Activated CD4-positive, alpha-beta memory T cell treated with anti-CD3 and anti-CD28 coated beads, Interleukin-2, amount 10 ng/mL, durations not matched to agents 7 days and 5 days (primary cell): ENCODE measurements at regions of chr9 and their contacts with region 1.

Region 1: DNA sequence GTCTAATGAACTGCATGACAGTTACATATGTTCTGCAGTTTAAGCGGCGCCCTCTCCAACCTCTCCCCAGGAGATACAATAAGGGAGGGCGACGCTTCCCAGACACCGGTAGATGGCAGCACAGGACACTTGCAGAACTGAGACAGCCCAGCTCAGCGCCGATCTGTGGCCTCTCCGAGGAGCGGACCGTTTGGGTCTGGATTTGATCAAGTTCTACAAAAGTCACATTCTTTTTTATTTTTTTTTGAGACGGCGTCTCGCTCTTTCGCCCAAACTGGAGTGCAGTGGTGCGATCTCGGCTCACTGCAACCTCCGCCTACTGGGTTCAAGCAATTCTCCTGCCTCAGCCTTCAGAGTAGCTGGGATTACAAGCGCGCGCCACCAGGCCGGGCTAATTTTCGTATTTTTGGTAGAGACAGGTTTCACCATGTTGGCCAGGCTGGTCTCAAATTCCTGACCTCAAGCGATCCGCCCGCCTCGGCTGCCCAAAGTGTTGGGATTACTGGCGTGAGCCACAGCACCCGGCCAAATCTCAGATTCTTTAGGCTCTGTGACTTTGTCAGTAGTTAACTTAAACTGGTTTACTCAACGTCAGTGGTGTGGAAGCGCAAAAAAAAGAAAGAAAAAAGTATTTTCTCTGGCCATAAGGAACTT is 1.4 kb upstream of the ATOSB start:
- DNase-seq: peak; percentile 89
- H3K4me3 Mint-ChIP-seq: peak overlapping the region; percentile 98
- H3K27ac Mint-ChIP-seq: peak overlapping the region; percentile 92
- H3K4me1 Mint-ChIP-seq: peaks cover 38% of the 10 kb centered on the region
- H3K27me3 Mint-ChIP-seq: no peaks in the 10 kb centered on the region

Region 2: DNA sequence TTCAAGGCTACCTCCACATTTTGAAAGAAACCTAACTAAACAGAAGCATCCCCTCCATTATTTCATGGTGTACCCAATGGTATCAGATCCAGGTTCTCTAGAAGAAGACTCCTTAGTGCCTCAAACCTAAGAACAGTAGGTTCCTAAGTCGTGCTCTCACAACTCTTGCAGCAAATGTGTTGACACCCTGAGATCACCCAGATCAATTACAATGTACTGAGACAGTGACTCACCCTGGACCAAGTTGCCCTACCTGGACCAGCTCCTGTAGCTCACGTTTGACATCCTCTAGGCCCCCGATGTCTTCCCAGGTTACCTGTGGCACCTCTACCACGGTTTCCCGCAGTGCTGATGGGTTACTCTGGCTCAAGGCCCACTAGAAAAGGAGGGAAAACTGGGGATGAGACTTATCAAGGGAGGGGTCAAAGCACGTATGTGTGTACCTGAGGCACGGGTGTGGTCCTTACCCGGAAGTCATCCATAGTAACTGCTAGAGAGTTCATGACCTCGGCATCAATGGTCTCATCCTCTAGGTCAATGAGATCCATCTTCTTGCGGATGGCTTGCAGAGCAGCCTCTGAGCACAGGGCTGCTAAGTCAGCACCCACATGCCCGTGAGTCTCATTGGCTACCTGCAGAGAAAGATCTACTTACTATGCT is 56.3 kb before region 1 on chr9:
- CTCF ChIA-PET with region 1: no interaction called
- POLR2A ChIA-PET with region 1: no interaction called
- DNase-seq: no peak
- H3K4me3 Mint-ChIP-seq: no peak overlapping the region
- H3K27ac Mint-ChIP-seq: no peak overlapping the region
- H3K4me1 Mint-ChIP-seq: peaks cover 2% of the 10 kb centered on the region
- H3K27me3 Mint-ChIP-seq: no peaks in the 10 kb centered on the region

Region 3: GRCh38 chr9:35079426-35080341 is 37.3 kb before region 1 on chr9 and contains the start of gene FANCG:
- CTCF ChIA-PET with region 1: interaction called, 6 read pairs
- POLR2A ChIA-PET with region 1: interaction called, 38 read pairs
- DNase-seq: peak; percentile 89
- H3K4me3 Mint-ChIP-seq: peak within 1 kb of the TSS; percentile 95
- H3K27ac Mint-ChIP-seq: peak within 1 kb of the TSS; percentile 99
- H3K4me1 Mint-ChIP-seq: peaks cover 40% of the 10 kb centered on the region
- H3K27me3 Mint-ChIP-seq: no peaks in the 10 kb centered on the region
- total RNA-seq, gene FANCG: 97.0 to 100 TPM

Region 4: DNA sequence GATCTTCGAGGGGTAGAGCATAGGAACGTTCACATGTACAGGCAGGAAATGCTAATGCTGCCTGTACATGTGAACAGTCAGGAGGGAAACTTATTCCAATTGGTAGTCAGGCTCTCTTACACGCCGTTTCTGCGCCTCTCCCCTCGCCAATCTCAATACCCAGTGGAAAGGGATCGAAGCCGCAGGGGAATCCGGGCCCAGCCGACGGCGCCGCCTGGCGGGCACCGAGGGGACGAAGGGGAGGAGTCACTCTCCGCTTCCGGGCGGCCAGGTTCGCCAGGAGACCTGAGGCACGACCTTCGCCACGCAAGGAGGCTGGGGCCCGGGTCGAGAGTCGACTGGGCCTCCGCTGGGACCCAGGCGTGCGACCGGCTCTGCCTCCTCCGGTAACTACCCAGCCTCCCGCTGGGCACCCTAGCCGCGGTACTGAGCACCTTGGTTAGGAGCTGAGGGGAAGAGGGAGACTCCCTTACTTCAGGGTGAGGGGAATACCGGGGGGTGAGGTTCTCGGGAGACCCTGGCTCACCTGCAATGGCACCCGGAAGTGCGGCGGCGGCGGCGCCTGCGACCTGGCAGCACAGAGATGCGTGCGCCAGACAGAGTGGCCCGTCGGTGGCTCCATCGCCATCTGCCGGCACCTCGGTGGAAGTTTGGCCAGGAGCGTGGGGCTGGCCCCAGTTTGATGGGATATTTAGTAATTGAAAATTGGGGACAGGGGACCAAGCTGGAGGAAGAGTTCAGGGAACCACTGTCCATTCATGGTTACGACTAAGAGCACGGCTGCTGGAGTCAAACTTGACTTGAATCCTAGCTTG is 20.8 kb before region 1 on chr9 and contains the start of gene PIGO:
- CTCF ChIA-PET with region 1: interaction called, 21 read pairs
- POLR2A ChIA-PET with region 1: interaction called, 39 read pairs
- DNase-seq: peak; percentile 89
- H3K4me3 Mint-ChIP-seq: peak within 1 kb of the TSS; percentile 82
- H3K27ac Mint-ChIP-seq: peak within 1 kb of the TSS; percentile 86
- H3K4me1 Mint-ChIP-seq: peaks cover 44% of the 10 kb centered on the region
- H3K27me3 Mint-ChIP-seq: no peaks in the 10 kb centered on the region
- total RNA-seq, gene PIGO: 22.8 to 28.6 TPM

Region 5: GRCh38 chr9:35102926-35103659 is 13.9 kb before region 1 on chr9 and contains the start of gene STOML2:
- CTCF ChIA-PET with region 1: interaction called, 28 read pairs
- POLR2A ChIA-PET with region 1: interaction called, 50 read pairs
- DNase-seq: peak; percentile 95
- H3K4me3 Mint-ChIP-seq: peak within 1 kb of the TSS; percentile 80
- H3K27ac Mint-ChIP-seq: peak within 1 kb of the TSS; percentile 88
- H3K4me1 Mint-ChIP-seq: peaks cover 39% of the 10 kb centered on the region
- H3K27me3 Mint-ChIP-seq: no peaks in the 10 kb centered on the region
- total RNA-seq, gene STOML2: 96.0 to 96.9 TPM

Region 6: DNA sequence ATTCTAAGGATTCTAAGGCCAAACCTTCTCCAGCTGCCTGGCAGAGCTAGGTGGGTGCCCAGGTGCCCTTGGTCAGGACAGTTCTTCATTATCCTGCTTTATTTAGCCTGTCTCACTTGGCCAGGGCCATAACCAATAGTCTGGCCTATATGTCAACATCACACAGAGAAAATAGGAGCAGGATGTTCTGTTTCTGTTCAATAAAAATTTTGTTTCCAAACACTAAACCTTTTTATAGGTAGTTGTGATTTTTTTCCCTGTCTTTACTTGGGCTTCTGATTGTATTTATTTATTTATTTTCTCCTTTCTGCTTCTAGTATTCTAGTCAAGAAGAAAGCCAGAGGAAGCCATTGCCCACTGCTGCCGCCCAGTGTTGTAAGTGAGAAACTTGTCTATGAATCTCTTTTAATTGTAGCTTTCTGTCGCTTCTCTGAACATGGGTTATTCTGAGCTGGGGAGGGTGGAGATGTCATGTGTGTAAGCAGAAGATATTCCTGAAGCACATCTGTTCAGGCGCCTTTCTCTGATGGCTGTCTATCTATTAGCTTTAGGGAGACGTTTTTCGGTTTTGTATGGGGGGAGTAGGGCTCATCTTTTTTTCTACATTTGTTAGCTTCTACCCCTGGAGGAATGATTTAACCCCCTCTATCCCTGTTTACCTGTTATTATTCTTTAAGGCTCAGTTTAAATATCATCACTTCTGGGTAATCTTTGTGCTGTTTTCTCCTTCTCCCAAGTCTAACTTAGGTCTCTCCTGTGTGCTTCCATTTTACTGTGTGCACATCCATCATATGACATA is 141.8 kb after region 1 on chr9:
- CTCF ChIA-PET with region 1: interaction called, 69 read pairs
- POLR2A ChIA-PET with region 1: no interaction called
- DNase-seq: peak; percentile 50
- H3K4me3 Mint-ChIP-seq: no peak overlapping the region
- H3K27ac Mint-ChIP-seq: no peak overlapping the region
- H3K4me1 Mint-ChIP-seq: peaks cover 3% of the 10 kb centered on the region
- H3K27me3 Mint-ChIP-seq: no peaks in the 10 kb centered on the region

Region 7: GRCh38 chr9:35476596-35476995 is 359.6 kb after region 1 on chr9:
- CTCF ChIA-PET with region 1: interaction called, 11 read pairs
- POLR2A ChIA-PET with region 1: no interaction called
- DNase-seq: no peak
- H3K4me3 Mint-ChIP-seq: no peak overlapping the region
- H3K27ac Mint-ChIP-seq: no peak overlapping the region
- H3K4me1 Mint-ChIP-seq: no peaks in the 10 kb centered on the region
- H3K27me3 Mint-ChIP-seq: peaks cover 17% of the 10 kb centered on the region

Region 8: DNA sequence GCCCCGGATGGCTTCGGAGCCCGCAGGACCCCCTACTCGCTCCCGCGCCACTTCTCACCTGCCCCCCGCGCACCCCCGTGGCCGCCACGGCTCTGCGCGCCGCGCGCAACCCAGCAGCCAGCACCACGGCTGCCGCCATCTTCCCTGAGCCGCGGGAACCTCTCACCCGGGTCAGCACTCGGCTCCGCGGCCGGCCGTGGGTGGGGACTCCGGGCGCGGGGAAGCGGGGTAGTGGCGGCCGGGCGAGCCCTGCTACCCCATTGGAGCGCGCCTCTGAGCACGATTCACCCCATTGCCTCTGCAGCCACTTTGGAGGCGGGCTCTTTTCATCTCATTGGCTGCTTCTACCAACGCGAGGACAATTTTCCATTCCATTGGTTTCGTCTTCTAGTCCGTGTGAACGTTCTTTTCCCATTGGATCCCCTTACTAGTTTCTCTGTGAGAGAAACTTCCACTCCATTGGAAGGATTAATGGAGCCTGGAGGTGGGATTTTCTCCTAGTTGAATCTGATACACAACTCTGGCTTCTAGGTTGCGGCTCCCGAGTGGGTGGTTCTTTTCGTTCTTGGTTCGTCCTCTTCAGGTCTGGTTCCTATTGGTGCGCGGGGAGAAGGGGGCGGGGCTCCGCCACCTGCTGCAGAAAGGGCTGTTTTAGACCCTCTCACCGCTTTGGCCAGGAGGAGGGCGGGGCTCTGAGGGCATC is 698.0 kb after region 1 on chr9 and contains the start of gene HINT2:
- CTCF ChIA-PET with region 1: no interaction called
- POLR2A ChIA-PET with region 1: interaction called, 10 read pairs
- DNase-seq: peak; percentile 99
- H3K4me3 Mint-ChIP-seq: peak within 1 kb of the TSS; percentile 87
- H3K27ac Mint-ChIP-seq: peak within 1 kb of the TSS; percentile 92
- H3K4me1 Mint-ChIP-seq: peaks cover 45% of the 10 kb centered on the region
- H3K27me3 Mint-ChIP-seq: peaks cover 4% of the 10 kb centered on the region
- total RNA-seq, gene HINT2: 77.8 to 79.2 TPM